ENCODE measurements at regions of chr13 and their contacts with region 1.

Region 1: GRCh38 chr13:33678906-33679657 is 138.9 kb upstream of the RFC3 start:
- DNase-seq: peak; percentile 93
- H3K4me3 Mint-ChIP-seq: peak overlapping the region; percentile 81
- H3K27ac Mint-ChIP-seq: peak overlapping the region; percentile 98
- H3K4me1 Mint-ChIP-seq: peaks cover 46% of the 10 kb centered on the region
- H3K27me3 Mint-ChIP-seq: no peaks in the 10 kb centered on the region

Region 2: GRCh38 chr13:33554919-33555791 is 123.9 kb before region 1 on chr13:
- CTCF ChIA-PET with region 1: no interaction called
- POLR2A ChIA-PET with region 1: no interaction called
- intact Hi-C with region 1: loop called (anchors 5 kb)
- DNase-seq: peak; percentile 14
- H3K4me3 Mint-ChIP-seq: no peak overlapping the region
- H3K27ac Mint-ChIP-seq: no peak overlapping the region
- H3K4me1 Mint-ChIP-seq: peaks cover 21% of the 10 kb centered on the region
- H3K27me3 Mint-ChIP-seq: no peaks in the 10 kb centered on the region

Region 3: DNA sequence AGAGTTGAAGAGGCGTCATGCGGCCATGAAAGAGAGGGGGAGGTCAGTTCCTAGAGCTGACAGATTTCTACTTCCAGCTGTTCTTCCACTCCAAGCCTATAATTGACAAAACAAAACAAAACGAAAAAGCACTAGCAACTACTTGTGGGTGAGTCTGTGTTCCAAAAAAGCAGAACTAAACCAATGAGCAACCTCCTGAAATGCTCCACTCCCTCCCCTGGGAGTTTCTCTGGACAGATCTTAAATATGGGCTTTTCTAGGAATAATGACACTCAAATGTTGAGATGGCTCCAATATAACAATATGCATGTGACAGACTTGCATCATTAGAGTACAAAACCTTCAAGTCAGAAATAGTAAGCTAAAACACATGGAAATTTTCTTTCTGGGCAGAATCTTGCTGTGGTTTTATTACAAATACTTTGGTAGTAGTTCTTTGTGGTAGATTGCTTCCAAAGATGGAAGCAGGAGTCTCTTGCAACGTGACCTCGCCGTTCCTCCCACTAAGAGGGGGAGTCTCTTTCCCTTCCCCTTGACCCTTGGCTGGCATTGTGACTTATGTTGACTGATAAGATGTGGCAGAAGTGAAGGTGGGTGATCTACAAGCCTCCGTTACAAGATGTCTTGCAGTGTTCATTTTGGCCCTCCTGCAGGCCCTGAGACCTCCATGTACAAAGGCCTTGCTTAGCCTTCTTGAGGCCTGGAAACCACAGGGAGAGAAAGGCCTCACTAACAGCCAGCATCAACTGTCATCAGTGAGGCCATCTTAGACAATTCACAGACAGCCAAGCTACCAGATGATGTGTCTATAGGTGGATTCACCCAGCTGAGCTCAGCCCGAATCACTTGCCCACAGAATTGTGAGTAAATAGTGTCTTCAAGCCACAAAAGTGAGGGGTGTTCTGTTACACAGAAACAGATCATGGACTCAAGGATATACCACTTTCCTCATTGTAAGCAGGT is 34.2 kb before region 1 on chr13:
- CTCF ChIA-PET with region 1: no interaction called
- POLR2A ChIA-PET with region 1: interaction called, 9 read pairs
- intact Hi-C with region 1: loop called (anchors 1 kb)
- DNase-seq: peak; percentile 48
- H3K4me3 Mint-ChIP-seq: no peak overlapping the region
- H3K27ac Mint-ChIP-seq: peak overlapping the region; percentile 14
- H3K4me1 Mint-ChIP-seq: peaks cover 46% of the 10 kb centered on the region
- H3K27me3 Mint-ChIP-seq: no peaks in the 10 kb centered on the region

Region 4: GRCh38 chr13:33723772-33724435 is 44.8 kb after region 1 on chr13:
- CTCF ChIA-PET with region 1: interaction called, 22 read pairs
- POLR2A ChIA-PET with region 1: interaction called, 9 read pairs
- intact Hi-C with region 1: loop called (anchors 1 kb)
- DNase-seq: peak; percentile 78
- H3K4me3 Mint-ChIP-seq: no peak overlapping the region
- H3K27ac Mint-ChIP-seq: peak overlapping the region; percentile 57
- H3K4me1 Mint-ChIP-seq: peaks cover 37% of the 10 kb centered on the region
- H3K27me3 Mint-ChIP-seq: no peaks in the 10 kb centered on the region